Activated CD4-positive, alpha-beta T cell treated with anti-CD3 and anti-CD28 coated beads for 36 hours (primary cell): ENCODE measurements at regions of chr1 and their contacts with region 1.

Region 1: GRCh38 chr1:171644805-171645483 is 7.5 kb downstream of the MYOC start:
- DNase-seq: peak; percentile 84
- ATAC-seq: peak; percentile 98
- H3K4me3 Mint-ChIP-seq: no peak overlapping the region
- H3K27ac Mint-ChIP-seq: no peak overlapping the region
- H3K4me1 Mint-ChIP-seq: peaks cover 6% of the 10 kb centered on the region
- H3K27me3 Mint-ChIP-seq: no peaks in the 10 kb centered on the region

Region 2: GRCh38 chr1:171485375-171486047 is 159.4 kb before region 1 on chr1 and contains the start of gene PRRC2C:
- CTCF ChIA-PET with region 1: no interaction called
- POLR2A ChIA-PET with region 1: no interaction called
- intact Hi-C with region 1: loop called in 1 of 2 experiments (anchors 2 kb)
- DNase-seq: peak; percentile 97
- ATAC-seq: peak; percentile 90
- H3K4me3 Mint-ChIP-seq: peak within 1 kb of the TSS; percentile 82
- H3K27ac Mint-ChIP-seq: peak within 1 kb of the TSS; percentile 95
- H3K4me1 Mint-ChIP-seq: peaks cover 43% of the 10 kb centered on the region
- H3K27me3 Mint-ChIP-seq: no peaks in the 10 kb centered on the region
- total RNA-seq, gene PRRC2C: 233 to 351 TPM

Region 3: GRCh38 chr1:171654942-171655745 is 10.2 kb after region 1 on chr1:
- CTCF ChIA-PET with region 1: interaction called, 56 read pairs
- POLR2A ChIA-PET with region 1: interaction called, 3 read pairs
- intact Hi-C with region 1: no loop called
- DNase-seq: peak; percentile 90
- ATAC-seq: peak; percentile 93
- H3K4me3 Mint-ChIP-seq: no peak overlapping the region
- H3K27ac Mint-ChIP-seq: no peak overlapping the region
- H3K4me1 Mint-ChIP-seq: peaks cover 8% of the 10 kb centered on the region
- H3K27me3 Mint-ChIP-seq: peaks cover 9% of the 10 kb centered on the region

Region 4: DNA sequence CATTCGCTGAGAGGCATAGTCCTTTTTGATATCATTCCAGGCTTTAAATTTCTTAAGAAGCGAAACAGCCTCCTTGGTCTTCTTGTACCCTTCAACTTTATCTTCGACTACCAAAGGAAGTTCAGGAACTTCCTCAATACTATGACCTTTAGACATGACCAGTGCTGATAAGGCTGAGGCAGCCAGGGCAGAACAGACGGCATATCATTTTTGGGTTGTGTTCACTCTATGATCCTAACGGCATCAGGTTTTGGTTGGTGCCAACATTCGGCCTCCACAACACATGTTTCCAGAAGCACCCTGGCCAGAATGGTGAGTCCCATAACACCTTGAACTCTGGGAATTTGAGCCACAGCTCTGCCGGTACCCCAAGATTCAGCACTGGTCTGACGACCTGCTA is 38.9 kb after region 1 on chr1:
- CTCF ChIA-PET with region 1: no interaction called
- POLR2A ChIA-PET with region 1: no interaction called
- intact Hi-C with region 1: no loop called
- DNase-seq: no peak
- ATAC-seq: no peak
- H3K4me3 Mint-ChIP-seq: no peak overlapping the region
- H3K27ac Mint-ChIP-seq: no peak overlapping the region
- H3K4me1 Mint-ChIP-seq: no peaks in the 10 kb centered on the region
- H3K27me3 Mint-ChIP-seq: peaks cover 4% of the 10 kb centered on the region

Region 5: DNA sequence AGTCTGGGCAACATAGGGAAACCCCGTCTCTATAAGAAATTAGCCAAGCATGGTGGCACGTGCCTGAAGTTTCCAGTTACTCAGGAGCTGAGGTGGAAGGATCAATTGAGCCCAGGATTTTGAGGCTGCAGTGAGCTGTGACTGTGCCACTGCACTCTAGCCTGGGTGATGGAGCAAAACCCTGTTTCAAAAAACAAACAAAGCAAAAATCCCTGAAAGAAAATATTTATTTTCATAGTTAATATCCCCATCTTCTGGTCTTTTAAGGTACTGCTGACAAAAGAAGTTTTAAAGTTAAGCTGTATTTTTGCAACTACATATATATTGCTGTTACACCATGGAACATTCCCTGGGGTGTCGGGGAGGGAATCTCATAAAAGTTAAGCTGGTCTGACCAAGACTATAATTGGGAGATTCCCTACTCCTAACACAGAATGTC is 70.9 kb after region 1 on chr1:
- CTCF ChIA-PET with region 1: interaction called, 17 read pairs
- POLR2A ChIA-PET with region 1: no interaction called
- intact Hi-C with region 1: loop called (anchors 2 to 10 kb)
- DNase-seq: no peak
- ATAC-seq: no peak
- H3K4me3 Mint-ChIP-seq: no peak overlapping the region
- H3K27ac Mint-ChIP-seq: no peak overlapping the region
- H3K4me1 Mint-ChIP-seq: peaks cover 3% of the 10 kb centered on the region
- H3K27me3 Mint-ChIP-seq: no peaks in the 10 kb centered on the region

Region 6: DNA sequence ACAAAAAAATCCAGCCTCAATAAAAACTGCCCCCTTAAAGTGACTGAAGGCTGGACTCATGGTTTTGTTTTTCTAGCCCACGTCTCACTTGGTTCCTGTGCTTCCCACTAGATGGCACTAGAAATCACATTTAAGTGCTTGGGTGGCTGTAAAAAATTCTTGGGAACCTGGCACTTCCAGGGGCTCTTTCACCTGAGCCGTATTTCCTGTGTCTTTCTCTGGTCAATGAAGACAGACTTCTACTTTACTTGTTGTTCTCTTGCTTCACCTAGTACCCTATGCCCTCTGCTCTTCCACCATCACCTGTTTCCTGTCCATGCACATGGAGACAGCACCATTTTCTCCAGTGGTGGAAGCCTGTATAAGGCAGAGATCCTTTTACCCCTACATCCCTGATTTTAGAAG is 156.5 kb after region 1 on chr1:
- CTCF ChIA-PET with region 1: interaction called, 19 read pairs
- POLR2A ChIA-PET with region 1: no interaction called
- intact Hi-C with region 1: no loop called
- DNase-seq: no peak
- ATAC-seq: peak; percentile 57
- H3K4me3 Mint-ChIP-seq: no peak overlapping the region
- H3K27ac Mint-ChIP-seq: no peak overlapping the region
- H3K4me1 Mint-ChIP-seq: peaks cover 4% of the 10 kb centered on the region
- H3K27me3 Mint-ChIP-seq: no peaks in the 10 kb centered on the region

Region 7: DNA sequence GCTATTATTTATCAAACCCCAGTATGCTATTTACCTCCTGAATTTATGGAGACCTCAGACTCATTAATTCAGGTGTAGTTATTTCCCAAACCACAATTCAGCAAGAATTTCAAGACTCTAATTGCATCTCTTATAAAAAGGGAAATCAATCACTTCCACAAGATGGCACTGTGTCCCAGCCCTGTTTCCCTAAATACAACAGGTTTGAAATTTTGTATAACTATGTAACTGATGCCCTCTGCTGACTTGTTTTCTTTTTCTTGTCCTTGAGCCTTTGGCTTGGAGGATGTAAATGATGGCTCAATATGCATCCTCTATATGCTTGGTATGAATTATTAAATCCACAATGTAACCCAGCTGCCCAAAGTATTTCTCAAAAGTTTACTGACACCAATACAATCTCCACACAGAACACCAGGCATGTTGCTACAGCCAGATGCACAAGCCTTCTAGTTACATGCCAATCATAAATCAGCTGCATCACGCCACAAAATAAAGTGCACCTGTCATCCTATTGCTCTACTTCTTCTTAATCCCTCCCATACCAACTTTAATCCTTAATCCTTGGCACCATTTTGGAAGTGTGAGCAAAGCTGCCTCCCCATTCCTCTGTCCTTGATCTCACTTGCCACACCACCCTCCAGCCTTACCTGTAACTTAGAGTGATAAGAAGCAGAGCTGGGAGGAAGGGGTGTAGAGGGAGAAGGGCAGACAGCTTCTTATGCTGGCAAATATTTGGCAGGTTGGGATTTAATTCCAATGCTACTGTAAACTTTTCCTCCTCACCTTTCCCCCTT is 784.6 kb after region 1 on chr1:
- CTCF ChIA-PET with region 1: interaction called, 3 read pairs
- POLR2A ChIA-PET with region 1: no interaction called
- intact Hi-C with region 1: loop called in 1 of 2 experiments (anchors 10 kb)
- DNase-seq: peak; percentile 66
- ATAC-seq: peak; percentile 71
- H3K4me3 Mint-ChIP-seq: no peak overlapping the region
- H3K27ac Mint-ChIP-seq: no peak overlapping the region
- H3K4me1 Mint-ChIP-seq: peaks cover 30% of the 10 kb centered on the region
- H3K27me3 Mint-ChIP-seq: no peaks in the 10 kb centered on the region